Endothelial cell of umbilical vein (primary cell): ENCODE measurements at regions of chr16 and their contacts with region 1.

Region 1: GRCh38 chr16:19601083-19601976 is 45.8 kb downstream of the VPS35L start:
- DNase-seq: peak; percentile 60
- H3K4me3 ChIP-seq: no peak overlapping the region
- H3K27ac ChIP-seq: no peak overlapping the region
- H3K4me1 ChIP-seq: peaks cover 5% of the 10 kb centered on the region
- H3K27me3 ChIP-seq: no peaks in the 10 kb centered on the region
- CTCF ChIP-seq: peak; percentile 41 to 49
- POLR2A ChIP-seq: no peak

Region 2: DNA sequence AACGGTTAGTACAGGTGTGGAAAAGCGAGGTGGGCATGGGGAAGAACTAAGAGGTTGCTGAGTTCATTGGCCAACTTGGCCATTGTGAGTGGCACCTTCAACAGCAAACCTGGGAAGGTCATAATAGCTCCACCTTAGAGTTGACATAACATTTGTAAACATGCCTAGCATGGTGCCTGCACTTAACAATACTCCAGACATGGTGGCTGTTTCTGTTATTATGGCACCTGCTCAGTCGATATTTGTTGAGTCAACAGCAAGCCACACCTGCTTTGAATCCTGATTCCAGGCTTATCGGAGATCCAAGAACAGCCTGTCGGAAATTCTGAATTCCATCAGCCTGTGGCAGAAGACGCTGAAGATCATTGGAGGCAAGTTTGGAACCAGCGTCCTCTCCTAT is 137.8 kb before region 1 on chr16:
- CTCF ChIA-PET with region 1: no interaction called
- POLR2A ChIA-PET with region 1: no interaction called
- dilution Hi-C with region 1: no loop called
- intact Hi-C with region 1: no loop called
- DNase-seq: no peak
- H3K4me3 ChIP-seq: no peak overlapping the region
- H3K27ac ChIP-seq: no peak overlapping the region
- H3K4me1 ChIP-seq: no peaks in the 10 kb centered on the region
- H3K27me3 ChIP-seq: no peaks in the 10 kb centered on the region
- CTCF ChIP-seq: no peak
- POLR2A ChIP-seq: no peak

Region 3: GRCh38 chr16:19583665-19584300 is 17.5 kb before region 1 on chr16:
- CTCF ChIA-PET with region 1: interaction called, 131 read pairs
- POLR2A ChIA-PET with region 1: no interaction called
- dilution Hi-C with region 1: no loop called
- intact Hi-C with region 1: no loop called
- DNase-seq: peak; percentile 60
- H3K4me3 ChIP-seq: no peak overlapping the region
- H3K27ac ChIP-seq: no peak overlapping the region
- H3K4me1 ChIP-seq: no peaks in the 10 kb centered on the region
- H3K27me3 ChIP-seq: no peaks in the 10 kb centered on the region
- CTCF ChIP-seq: peak; percentile 80 to 81
- POLR2A ChIP-seq: no peak

Region 4: GRCh38 chr16:19613834-19614233 is 12.5 kb after region 1 on chr16:
- CTCF ChIA-PET with region 1: interaction called, 11 read pairs
- POLR2A ChIA-PET with region 1: no interaction called
- dilution Hi-C with region 1: no loop called
- intact Hi-C with region 1: no loop called
- DNase-seq: no peak
- H3K4me3 ChIP-seq: no peak overlapping the region
- H3K27ac ChIP-seq: no peak overlapping the region
- H3K4me1 ChIP-seq: no peaks in the 10 kb centered on the region
- H3K27me3 ChIP-seq: no peaks in the 10 kb centered on the region
- CTCF ChIP-seq: no peak
- POLR2A ChIP-seq: no peak

Region 5: GRCh38 chr16:19717771-19718602 is 116.7 kb after region 1 on chr16 and contains the starts of genes IQCK and KNOP1:
- CTCF ChIA-PET with region 1: interaction called, 3 read pairs
- POLR2A ChIA-PET with region 1: no interaction called
- dilution Hi-C with region 1: no loop called
- intact Hi-C with region 1: loop called (anchors 5 kb)
- DNase-seq: peak; percentile 89
- H3K4me3 ChIP-seq: peak within 1 kb of the TSS; percentile 68 to 100 (median 99)
- H3K27ac ChIP-seq: peak within 1 kb of the TSS; percentile 81
- H3K4me1 ChIP-seq: peaks cover 13% of the 10 kb centered on the region
- H3K27me3 ChIP-seq: no peaks in the 10 kb centered on the region
- CTCF ChIP-seq: peak in 1 of 2 donors; percentile 15
- POLR2A ChIP-seq: peak; percentile 32
- total RNA-seq, gene IQCK: 13.2 and 17.2 TPM in 2 replicates
- total RNA-seq, gene KNOP1: 33.5 and 43.2 TPM in 2 replicates

Region 6: GRCh38 chr16:19898924-19899604 is 297.7 kb after region 1 on chr16:
- CTCF ChIA-PET with region 1: interaction called, 21 read pairs
- POLR2A ChIA-PET with region 1: no interaction called
- dilution Hi-C with region 1: no loop called
- intact Hi-C with region 1: no loop called
- DNase-seq: peak; percentile 55
- H3K4me3 ChIP-seq: no peak overlapping the region
- H3K27ac ChIP-seq: no peak overlapping the region
- H3K4me1 ChIP-seq: no peaks in the 10 kb centered on the region
- H3K27me3 ChIP-seq: no peaks in the 10 kb centered on the region
- CTCF ChIP-seq: peak; percentile 62 to 69
- POLR2A ChIP-seq: no peak